ENCODE measurements at regions of chr11 and their contacts with region 1.

Region 1: DNA sequence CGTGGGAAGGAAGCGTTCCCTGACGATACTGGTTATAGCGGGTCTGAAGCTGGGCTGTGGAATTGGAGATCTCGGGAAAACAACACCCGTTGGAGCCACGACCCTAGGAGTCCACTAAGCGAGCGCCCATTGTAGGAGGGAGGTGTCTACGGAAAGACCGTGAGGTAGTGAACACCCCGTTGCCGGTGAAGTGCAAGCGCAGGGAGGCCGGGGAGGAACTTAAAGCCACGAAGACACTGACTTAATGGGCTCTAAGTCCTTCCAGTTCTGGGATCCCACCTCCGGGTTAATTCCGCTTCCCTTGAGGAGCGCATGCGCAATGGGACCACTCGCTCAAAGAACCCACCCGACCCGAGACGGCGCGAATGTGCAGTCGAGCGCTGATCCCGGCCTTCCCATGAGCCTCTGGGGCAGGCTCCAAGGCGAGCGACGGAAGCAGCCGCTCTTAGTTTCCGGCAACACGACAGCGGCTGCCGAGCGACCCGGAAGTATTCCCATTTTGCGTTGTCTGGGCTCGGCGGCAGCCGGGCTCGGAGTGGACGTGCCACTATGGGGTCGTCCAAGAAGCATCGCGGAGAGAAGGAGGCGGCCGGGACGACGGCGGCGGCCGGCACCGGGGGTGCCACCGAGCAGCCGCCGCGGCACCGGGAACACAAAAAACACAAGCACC is at the start of gene SART1:
- DNase-seq: peak; percentile 100
- H3K4me3 ChIP-seq: peak within 1 kb of the TSS; percentile 88
- H3K27ac ChIP-seq: peak within 1 kb of the TSS; percentile 94
- H3K4me1 ChIP-seq: peaks cover 8% of the 10 kb centered on the region
- H3K27me3 ChIP-seq: no peaks in the 10 kb centered on the region
- CTCF ChIP-seq: no peak
- total RNA-seq, gene SART1: 95.8 and 96.3 TPM in 2 replicates

Region 2: GRCh38 chr11:66001942-66002647 is 40.7 kb after region 1 on chr11 and contains the starts of genes BANF1 and EIF1AD:
- CTCF ChIA-PET with region 1: interaction called, 3 read pairs
- POLR2A ChIA-PET with region 1: no interaction called
- intact Hi-C with region 1: loop called (anchors 5 kb)
- DNase-seq: peak; percentile 100
- H3K4me3 ChIP-seq: peak within 1 kb of the TSS; percentile 63
- H3K27ac ChIP-seq: peak within 1 kb of the TSS; percentile 93
- H3K4me1 ChIP-seq: peaks cover 3% of the 10 kb centered on the region
- H3K27me3 ChIP-seq: no peaks in the 10 kb centered on the region
- CTCF ChIP-seq: no peak
- total RNA-seq, gene BANF1: 541 and 556 TPM in 2 replicates
- total RNA-seq, gene EIF1AD: 69.4 and 86.2 TPM in 2 replicates

Measured in A673 (cell line).